ENCODE measurements at regions of chr5 and their contacts with region 1.

Region 1: DNA sequence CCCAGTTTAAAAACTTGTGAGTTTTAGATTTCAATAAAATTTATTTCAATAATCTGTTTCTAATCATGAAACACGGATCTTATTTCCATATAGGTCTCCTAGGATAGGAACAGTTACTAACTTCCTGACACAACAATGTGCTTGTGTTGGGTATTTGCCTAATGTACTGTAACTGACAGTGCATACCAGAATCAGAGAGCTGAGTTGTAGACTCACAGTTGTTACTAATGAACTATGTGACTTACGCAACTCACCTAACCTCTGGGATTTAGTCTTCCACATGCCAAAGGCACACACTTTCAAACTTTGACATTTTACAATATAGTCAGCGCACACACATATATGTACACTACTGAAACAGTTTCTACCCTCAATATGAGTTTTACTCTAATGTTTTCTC is 77.7 kb downstream of the HOMER1 start:
- DNase-seq: no peak
- H3K4me3 ChIP-seq: no peak overlapping the region
- CTCF ChIP-seq: no peak

Region 2: GRCh38 chr5:79001471-79001870 is 434.8 kb before region 1 on chr5:
- in situ Hi-C with region 1: no loop called
- DNase-seq: no peak
- H3K4me3 ChIP-seq: no peak overlapping the region
- CTCF ChIP-seq: no peak

Region 3: GRCh38 chr5:79357398-79357797 is 78.8 kb before region 1 on chr5:
- in situ Hi-C with region 1: loop called (anchors 5 kb)
- DNase-seq: peak; percentile 23
- H3K4me3 ChIP-seq: no peak overlapping the region
- CTCF ChIP-seq: no peak

Region 4: GRCh38 chr5:79386679-79387078 is 49.5 kb before region 1 on chr5:
- in situ Hi-C with region 1: no loop called
- DNase-seq: no peak
- H3K4me3 ChIP-seq: no peak overlapping the region
- CTCF ChIP-seq: no peak

Region 5: DNA sequence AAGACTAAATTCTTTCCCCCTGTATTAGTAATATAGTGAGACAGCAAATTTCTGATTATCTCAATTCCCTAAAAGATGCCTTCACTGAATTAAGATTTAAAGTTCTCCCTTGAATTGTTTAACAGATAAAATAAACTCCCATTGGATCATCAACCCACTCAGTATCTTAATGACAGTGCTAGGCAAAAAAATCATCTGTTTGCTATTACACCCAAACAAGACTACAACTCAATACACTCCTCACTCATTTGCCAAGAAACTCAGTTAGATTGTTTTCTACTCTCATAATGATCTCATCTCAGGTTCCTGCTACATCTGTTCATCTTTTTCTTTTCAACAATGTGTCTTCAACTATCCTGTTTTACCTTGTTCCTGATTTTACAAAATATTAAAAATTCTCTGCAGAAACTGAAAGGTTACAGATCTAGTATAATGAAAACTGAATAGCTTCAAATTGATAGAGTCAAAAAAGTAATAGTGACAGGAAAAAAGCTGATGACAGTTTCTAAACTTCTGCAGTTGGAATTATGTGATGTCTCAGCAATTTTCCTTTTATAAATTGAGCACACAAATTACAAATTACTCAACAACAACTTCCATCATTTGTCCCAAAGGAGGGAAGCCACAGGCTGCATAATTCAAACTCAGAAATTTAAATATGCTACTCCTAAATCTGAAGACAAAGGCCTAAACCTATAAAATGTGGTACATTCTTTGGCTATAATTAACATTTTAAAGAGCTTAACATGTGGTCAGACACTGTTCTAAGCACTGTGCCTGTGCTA is 38.3 kb after region 1 on chr5:
- in situ Hi-C with region 1: no loop called
- DNase-seq: no peak
- H3K4me3 ChIP-seq: no peak overlapping the region
- CTCF ChIP-seq: no peak

Region 6: GRCh38 chr5:79567921-79568549 is 131.8 kb after region 1 on chr5:
- in situ Hi-C with region 1: no loop called
- DNase-seq: no peak
- H3K4me3 ChIP-seq: no peak overlapping the region
- CTCF ChIP-seq: no peak

Measured in astrocyte of the cerebellum (primary cell).